ENCODE measurements at regions of chr21 and their contacts with region 1.

Region 1: DNA sequence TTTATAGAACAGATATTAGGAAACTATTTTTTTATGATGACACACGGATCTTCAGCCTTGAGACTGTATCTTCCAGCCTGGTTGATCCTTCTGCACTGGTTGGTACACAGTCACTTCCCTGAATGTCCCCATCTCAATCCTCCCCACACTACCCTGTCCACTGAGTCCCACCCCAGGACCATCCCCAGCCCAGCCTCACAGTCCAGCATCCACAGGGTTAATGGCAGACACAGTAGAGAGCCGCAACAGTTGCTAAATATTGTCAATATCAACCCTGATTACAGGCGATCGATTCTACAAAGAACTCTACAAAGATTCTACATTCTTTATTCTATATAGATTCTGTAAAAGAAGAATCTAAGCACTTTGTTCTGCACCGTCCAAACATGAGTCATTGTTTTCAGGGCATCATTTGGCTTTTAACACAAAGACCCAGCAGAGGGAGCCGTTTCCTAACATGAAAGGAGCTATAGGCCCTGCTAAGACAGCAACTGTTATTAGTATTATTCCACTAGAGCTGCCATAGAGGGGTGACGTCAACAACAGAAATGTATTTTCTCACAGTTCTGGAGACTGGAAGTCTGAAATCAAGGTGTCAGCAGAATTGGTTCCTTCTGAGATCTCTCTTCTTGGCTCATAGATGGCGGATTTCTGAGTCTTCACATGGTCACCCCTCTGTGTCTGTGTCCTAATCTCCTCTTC is 30.1 kb upstream of the IFNAR2 start:
- DNase-seq: peak; percentile 73
- CTCF ChIP-seq: peak; percentile 76

Region 2: GRCh38 chr21:32834916-32835235 is 364.8 kb before region 1 on chr21:
- CTCF ChIA-PET with region 1: interaction called, 23 read pairs
- POLR2A ChIA-PET with region 1: no interaction called
- DNase-seq: no peak
- CTCF ChIP-seq: no peak

Region 3: DNA sequence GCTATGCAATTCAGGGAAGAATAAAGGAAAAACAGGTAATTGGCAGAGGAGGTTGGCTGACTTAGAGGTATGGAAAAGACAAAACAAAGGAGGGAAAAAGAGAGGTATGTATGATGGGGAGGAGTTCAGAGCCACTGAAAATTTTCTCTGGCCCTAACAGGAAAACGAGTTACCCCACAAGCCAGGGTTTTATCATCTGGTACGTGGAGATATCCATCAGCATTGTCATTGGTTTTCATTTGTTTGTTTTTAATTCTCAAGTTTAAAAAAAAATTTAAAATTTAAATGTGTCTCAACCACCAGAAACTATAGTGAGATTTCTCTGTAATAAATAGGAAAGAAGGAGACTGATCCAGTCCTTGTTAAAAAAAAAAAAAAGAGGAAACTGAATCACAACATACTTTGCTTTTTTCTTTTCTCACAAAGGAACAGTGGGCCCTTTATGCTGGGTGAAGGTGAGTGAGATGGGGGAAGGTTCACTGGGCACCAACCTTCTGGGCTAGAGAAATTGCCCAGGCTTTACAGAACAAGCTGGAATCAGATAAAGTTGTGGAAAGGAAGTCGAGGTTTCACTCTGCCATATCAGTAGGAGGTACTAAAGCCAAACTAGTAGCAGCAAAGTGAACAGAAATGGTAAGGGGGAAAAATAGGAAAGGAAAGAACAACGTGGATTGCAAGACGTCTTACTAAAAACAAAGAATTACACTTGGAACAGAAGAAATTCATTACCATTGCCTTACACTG is 32.8 kb after region 1 on chr21:
- CTCF ChIA-PET with region 1: interaction called, 13 read pairs
- POLR2A ChIA-PET with region 1: no interaction called
- DNase-seq: no peak
- CTCF ChIP-seq: no peak

Region 4: DNA sequence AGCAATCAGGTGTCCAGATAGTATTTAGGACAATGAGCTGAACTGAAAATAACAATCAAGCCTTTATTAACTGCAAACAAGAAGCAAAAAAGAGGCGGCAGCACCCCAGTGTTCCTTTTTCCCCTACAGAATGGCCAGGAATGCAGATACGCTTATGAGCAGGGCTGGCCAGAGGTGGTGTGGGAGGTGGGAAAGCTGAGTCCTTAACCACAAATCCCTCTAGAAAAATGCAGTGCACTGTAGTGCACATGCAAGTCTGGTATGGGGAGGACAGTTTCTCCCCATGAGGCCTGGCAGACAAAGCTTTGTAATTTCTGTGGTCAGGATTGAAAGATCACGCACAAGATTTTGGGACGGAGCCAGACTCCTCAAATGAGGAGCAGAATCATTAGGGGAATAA is 114.4 kb after region 1 on chr21:
- CTCF ChIA-PET with region 1: interaction called, 13 read pairs
- POLR2A ChIA-PET with region 1: no interaction called
- DNase-seq: no peak
- CTCF ChIP-seq: no peak

Region 5: DNA sequence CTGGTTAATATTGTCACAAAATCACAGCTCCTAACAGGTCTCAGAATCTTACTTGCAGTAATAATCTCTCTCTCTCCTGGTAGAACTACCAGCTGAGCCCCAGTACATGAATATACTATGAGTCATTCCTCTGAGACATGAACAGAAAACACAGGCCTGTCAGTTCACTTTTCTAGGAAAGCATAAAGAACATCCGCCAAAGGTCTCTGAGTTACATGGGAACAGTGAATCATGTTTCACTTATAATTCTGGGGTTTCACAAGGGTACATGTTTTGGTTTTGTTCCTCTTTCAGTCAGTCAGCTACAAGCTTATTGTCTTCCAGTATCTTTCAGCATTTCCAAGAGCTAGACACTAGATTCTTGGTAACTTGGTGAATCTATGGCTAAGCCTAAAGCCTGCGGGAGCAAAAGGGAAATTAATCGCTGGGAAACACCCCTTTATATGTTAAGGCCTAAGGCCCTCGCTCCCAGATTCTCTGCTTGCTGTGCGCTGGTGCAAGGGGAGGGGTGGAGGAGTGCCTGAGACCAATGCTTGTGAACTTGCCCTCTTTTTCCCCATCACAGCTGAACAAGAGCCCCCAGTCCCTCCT is 235.2 kb after region 1 on chr21:
- CTCF ChIA-PET with region 1: interaction called, 25 read pairs
- POLR2A ChIA-PET with region 1: no interaction called
- DNase-seq: peak; percentile 86
- CTCF ChIP-seq: no peak

Region 6: GRCh38 chr21:33608559-33608958 is 408.9 kb after region 1 on chr21:
- CTCF ChIA-PET with region 1: interaction called, 11 read pairs
- POLR2A ChIA-PET with region 1: no interaction called
- DNase-seq: no peak
- CTCF ChIP-seq: no peak

Measured in GM10248 (cell line).